ENCODE measurements at regions of chr5 and their contacts with region 1.

Region 1: GRCh38 chr5:78899922-78900362 is 85.2 kb downstream of the ARSB start:
- DNase-seq: peak; percentile 40 to 73
- H3K4me3 ChIP-seq: no peak overlapping the region
- H3K27ac ChIP-seq: no peak overlapping the region
- H3K4me1 ChIP-seq: peaks cover 0 to 7% (median 5%) of the 10 kb centered on the region in 4 donors
- H3K27me3 ChIP-seq: no peaks in the 10 kb centered on the region
- CTCF ChIP-seq: peak in 5 of 7 experiments; percentile 29 to 77 (median 62)
- EP300 ChIP-seq: no peak
- POLR2A ChIP-seq: no peak

Region 2: GRCh38 chr5:78648359-78649210 is 251.4 kb before region 1 on chr5 and contains the start of gene LHFPL2:
- intact Hi-C with region 1: no loop called
- DNase-seq: peak; percentile 77 to 94
- H3K4me3 ChIP-seq: peak within 1 kb of the TSS; percentile 73 to 87 (median 81)
- H3K27ac ChIP-seq: peak within 1 kb of the TSS; percentile 89 to 98 (median 95)
- H3K4me1 ChIP-seq: peaks cover 11 to 49% (median 31%) of the 10 kb centered on the region in 4 donors
- H3K27me3 ChIP-seq: peaks cover 0 to 12% (median 0%) of the 10 kb centered on the region in 3 donors
- CTCF ChIP-seq: no peak
- EP300 ChIP-seq: no peak
- POLR2A ChIP-seq: no peak
- total RNA-seq, gene LHFPL2: 20.5 to 53.6 (median 28.7) TPM

Region 3: GRCh38 chr5:78760770-78761169 is 139.2 kb before region 1 on chr5:
- intact Hi-C with region 1: no loop called
- DNase-seq: no peak
- H3K4me3 ChIP-seq: no peak overlapping the region
- H3K27ac ChIP-seq: no peak overlapping the region
- H3K4me1 ChIP-seq: peaks cover 0 to 10% (median 7%) of the 10 kb centered on the region in 4 donors
- H3K27me3 ChIP-seq: no peaks in the 10 kb centered on the region
- CTCF ChIP-seq: no peak
- EP300 ChIP-seq: no peak
- POLR2A ChIP-seq: no peak

Region 4: DNA sequence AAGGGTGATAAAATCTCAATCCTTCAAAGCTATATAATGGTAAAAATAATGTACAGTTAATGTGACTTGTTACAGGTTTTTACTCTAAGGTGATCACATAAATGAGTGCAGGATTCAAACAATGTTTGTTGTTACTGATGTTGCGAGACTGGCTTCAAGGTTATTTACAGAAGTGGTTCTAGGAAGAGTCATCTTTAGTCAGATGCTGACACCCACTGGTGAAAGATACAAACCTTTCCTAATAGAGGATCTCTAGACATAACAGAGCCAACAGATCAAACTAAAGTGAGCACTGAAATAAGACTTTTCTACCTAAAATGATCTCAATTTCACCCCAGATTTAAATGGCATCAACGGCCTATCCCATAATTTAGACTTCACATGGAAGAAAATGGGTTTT is 64.9 kb after region 1 on chr5:
- intact Hi-C with region 1: loop called (anchors 10 kb)
- DNase-seq: peak in 1 of 2 donors; percentile 83
- H3K4me3 ChIP-seq: no peak overlapping the region
- H3K27ac ChIP-seq: no peak overlapping the region
- H3K4me1 ChIP-seq: no peaks in the 10 kb centered on the region
- H3K27me3 ChIP-seq: no peaks in the 10 kb centered on the region
- CTCF ChIP-seq: peak in 2 of 7 experiments; percentile 40 to 46
- EP300 ChIP-seq: no peak
- POLR2A ChIP-seq: no peak

Measured in stomach (tissue), 19 donors.